Ascending aorta (tissue), 2 donors: ENCODE measurements at regions of chr21 and their contacts with region 1.

Region 1: GRCh38 chr21:33968080-33968994 is 52.7 kb upstream of the ATP5PO start:
- DNase-seq: peak in 1 of 2 donors; percentile 83
- H3K4me3 ChIP-seq: peak overlapping the region; percentile 11 to 27
- H3K27ac ChIP-seq: peak overlapping the region; percentile 81 to 83
- H3K4me1 ChIP-seq: peaks cover 3 to 21% of the 10 kb centered on the region in 2 donors
- H3K27me3 ChIP-seq: no peaks in the 10 kb centered on the region
- CTCF ChIP-seq: no peak

Region 2: GRCh38 chr21:33931799-33932390 is 36.4 kb before region 1 on chr21:
- intact Hi-C with region 1: loop called (anchors 5 kb)
- DNase-seq: no peak
- H3K4me3 ChIP-seq: peak overlapping the region; percentile 62 to 64
- H3K27ac ChIP-seq: peak overlapping the region; percentile 44 to 52
- H3K4me1 ChIP-seq: peaks cover 0 to 18% of the 10 kb centered on the region in 2 donors
- H3K27me3 ChIP-seq: no peaks in the 10 kb centered on the region
- CTCF ChIP-seq: no peak

Region 3: DNA sequence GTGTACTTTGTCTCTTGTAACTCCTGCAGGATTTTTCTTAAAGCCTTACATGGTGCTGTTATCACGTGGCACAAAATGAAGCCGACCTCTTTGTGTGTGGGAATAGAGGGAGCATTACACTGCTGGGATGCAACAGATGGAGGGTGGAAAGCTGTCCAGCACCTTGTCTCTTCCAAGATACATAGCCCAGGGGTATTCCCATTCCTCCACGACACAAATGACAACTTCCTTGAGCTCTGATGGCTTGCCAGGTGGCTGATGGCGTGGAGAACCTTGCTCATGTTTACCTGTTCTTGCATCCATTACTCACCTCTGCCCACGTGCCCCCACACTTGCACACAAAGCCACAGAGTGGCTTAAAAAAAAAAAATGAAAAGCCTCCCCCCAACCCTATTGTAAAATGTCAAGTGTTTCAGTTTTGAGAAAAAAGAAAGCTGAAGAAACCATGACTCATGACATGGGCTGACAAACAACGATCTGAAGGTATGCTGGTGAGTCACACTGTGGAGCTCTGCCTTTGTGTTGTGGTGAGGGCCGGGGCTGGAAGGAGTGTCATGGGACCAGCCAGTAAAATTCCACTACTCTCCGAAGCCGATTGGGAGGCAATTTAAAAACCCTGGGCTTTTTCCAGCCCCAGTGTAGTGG is 20.8 kb before region 1 on chr21:
- intact Hi-C with region 1: loop called (anchors 1 kb)
- DNase-seq: peak; percentile 79 to 91
- H3K4me3 ChIP-seq: peak overlapping the region; percentile 35 to 54
- H3K27ac ChIP-seq: peak overlapping the region; percentile 51 to 64
- H3K4me1 ChIP-seq: peaks cover 5 to 12% of the 10 kb centered on the region in 2 donors
- H3K27me3 ChIP-seq: no peaks in the 10 kb centered on the region
- CTCF ChIP-seq: no peak

Region 4: GRCh38 chr21:34020005-34020847 is 51.9 kb after region 1 on chr21:
- intact Hi-C with region 1: no loop called
- DNase-seq: no peak
- H3K4me3 ChIP-seq: no peak overlapping the region
- H3K27ac ChIP-seq: no peak overlapping the region
- H3K4me1 ChIP-seq: peaks cover 0 to 5% of the 10 kb centered on the region in 2 donors
- H3K27me3 ChIP-seq: no peaks in the 10 kb centered on the region
- CTCF ChIP-seq: no peak